ENCODE measurements at regions of chr11 and their contacts with region 1.

Region 1: GRCh38 chr11:64204464-64204989 is 2.0 kb upstream of the FERMT3 start:
- DNase-seq: peak in 3 of 4 donors; percentile 89 to 90 (median 89)
- ATAC-seq: peak; percentile 76
- H3K4me3 ChIP-seq: no peak overlapping the region
- H3K27ac ChIP-seq: peak overlapping the region; percentile 81 to 94
- H3K4me1 ChIP-seq: peaks cover 2 to 52% of the 10 kb centered on the region in 2 donors
- H3K27me3 ChIP-seq: no peaks in the 10 kb centered on the region
- CTCF ChIP-seq: peak; percentile 54 to 63

Region 2: GRCh38 chr11:64048042-64048854 is 156.3 kb before region 1 on chr11:
- intact Hi-C with region 1: no loop called
- DNase-seq: no peak
- ATAC-seq: no peak
- H3K4me3 ChIP-seq: no peak overlapping the region
- H3K27ac ChIP-seq: no peak overlapping the region
- H3K4me1 ChIP-seq: peaks cover 0 to 3% of the 10 kb centered on the region in 2 donors
- H3K27me3 ChIP-seq: no peaks in the 10 kb centered on the region
- CTCF ChIP-seq: no peak

Region 3: DNA sequence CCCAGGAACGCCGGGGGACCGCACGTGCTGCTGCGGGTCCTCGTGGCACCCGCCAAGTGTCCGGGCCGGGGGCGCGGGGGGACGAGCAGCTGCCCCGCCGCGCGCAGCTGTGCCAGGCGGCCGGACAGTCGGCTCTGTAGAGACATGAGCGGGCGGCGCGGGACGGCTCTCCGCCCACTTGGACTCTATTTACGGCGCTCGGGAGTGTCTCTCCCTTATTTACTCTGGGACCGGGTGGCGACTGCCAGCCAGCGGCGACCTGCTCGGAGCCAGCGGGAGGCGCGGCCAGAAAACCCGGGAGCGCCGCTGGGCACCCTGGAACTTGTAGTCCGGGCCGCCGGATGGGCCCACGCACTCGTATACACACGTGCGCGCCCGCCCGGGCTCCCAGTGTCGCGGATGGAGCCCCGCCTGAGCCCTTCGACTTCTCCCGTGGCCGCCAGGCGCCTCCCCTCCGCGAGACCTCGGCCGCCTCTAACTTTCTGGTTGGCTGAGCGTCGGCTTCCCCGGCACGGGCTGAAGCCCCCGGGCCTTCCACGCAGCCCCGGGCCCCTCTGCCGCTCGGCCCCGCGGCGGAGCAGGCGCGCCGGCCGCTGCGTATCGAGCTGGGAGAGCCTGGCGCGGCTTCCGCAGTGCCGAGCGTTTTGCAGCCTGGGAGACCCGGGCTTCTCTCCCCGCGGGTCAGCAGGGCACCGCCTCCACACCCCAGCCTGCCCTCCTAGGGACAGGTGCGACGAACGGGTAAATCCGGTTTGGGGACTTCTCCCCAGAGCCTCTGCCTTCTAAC is 38.5 kb before region 1 on chr11 and contains the start of gene MACROD1:
- intact Hi-C with region 1: no loop called
- DNase-seq: peak; percentile 57 to 94 (median 88)
- ATAC-seq: peak; percentile 94
- H3K4me3 ChIP-seq: peak within 1 kb of the TSS; percentile 74 to 81
- H3K27ac ChIP-seq: peak within 1 kb of the TSS; percentile 68 to 86
- H3K4me1 ChIP-seq: peaks cover 9 to 29% of the 10 kb centered on the region in 2 donors
- H3K27me3 ChIP-seq: peaks cover 0 to 18% of the 10 kb centered on the region in 2 donors
- CTCF ChIP-seq: no peak
- polyA plus RNA-seq, gene MACROD1: 18.5 to 25.1 (median 22.0) TPM

Region 4: DNA sequence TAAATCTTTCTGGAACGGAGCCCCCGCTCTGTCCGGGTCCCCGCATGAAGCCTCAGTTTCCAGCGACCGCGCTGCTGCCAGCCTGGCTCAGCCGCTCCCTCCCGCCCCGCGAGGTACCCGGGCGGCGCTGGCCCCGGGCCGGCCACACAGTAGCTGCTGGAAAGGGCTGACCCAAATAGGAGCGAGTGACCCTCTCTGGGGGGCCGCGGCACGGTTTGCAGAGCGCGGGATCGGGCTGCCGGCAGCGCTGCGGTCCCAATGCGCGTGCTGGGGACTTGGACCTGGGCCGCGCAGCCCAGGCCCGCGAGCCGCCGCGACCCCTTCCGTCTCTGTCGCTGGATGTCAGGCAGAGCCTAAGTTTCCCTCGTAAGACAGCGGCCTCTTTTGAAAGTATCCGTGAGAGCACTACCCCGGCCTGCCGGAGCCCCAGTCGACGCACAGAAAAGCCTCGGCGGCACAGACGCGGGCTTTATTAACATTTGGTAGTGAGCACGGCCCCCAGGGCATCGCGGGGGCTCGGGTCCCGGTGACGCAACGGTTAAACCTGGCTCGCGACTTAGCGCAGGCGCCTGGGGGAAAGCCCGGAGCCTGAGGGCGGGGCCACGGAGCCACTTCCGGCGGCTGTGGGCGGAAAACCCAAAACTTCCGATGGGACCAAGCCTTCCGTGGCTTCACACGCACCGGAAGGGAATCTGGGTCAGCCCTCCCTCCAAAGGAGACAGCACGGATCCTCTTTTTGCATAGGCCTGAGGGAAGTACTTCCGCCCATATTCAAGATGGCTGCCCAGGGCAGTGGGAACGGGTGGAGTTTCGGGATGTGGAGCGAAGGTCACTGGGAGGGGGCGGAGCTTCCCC is 65.1 kb after region 1 on chr11:
- intact Hi-C with region 1: no loop called
- DNase-seq: peak; percentile 98 to 100 (median 98)
- ATAC-seq: peak; percentile 84
- H3K4me3 ChIP-seq: peak overlapping the region; percentile 71 to 81
- H3K27ac ChIP-seq: peak overlapping the region; percentile 97 to 100
- H3K4me1 ChIP-seq: peaks cover 13 to 44% of the 10 kb centered on the region in 2 donors
- H3K27me3 ChIP-seq: no peaks in the 10 kb centered on the region
- CTCF ChIP-seq: no peak

Region 5: DNA sequence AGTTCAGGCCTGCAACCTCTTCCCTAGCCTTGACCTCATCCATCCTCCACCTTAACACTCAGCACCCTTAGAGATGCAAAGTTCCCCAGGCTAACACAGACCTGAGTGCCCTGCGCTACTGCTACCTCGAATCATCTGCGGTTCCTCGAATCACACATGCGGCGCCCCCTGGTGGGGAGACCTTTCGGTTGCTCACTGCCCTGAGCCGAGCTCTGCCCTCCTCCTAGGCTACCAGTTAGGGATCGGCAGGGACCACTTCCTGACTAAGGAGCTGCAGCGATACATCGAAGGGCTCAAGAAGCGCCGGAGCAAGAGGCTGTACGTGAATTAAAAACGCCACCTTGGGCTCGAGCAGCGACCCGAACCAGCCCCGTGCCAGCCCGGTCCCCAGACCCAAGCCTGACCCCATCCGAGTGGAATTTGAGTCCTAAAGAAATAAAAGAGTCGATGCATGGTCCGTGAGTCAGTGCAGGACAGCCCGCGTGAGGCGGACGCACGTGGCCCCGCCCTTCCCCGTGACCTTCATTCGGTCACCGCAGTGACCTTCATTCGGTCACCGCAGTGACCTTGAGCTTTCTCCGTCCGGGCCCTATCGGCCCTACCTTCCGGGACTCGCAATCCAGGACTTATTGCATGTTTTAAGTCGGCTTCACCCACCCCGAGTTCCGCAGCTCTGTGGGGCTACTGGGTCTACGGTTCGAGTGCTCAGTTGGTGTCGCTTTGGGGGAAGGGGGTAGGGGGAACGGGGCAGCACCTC is 100.0 kb after region 1 on chr11:
- intact Hi-C with region 1: loop called in 1 of 2 experiments (anchors 5 kb)
- DNase-seq: peak; percentile 77 to 97 (median 91)
- ATAC-seq: peak; percentile 58
- H3K4me3 ChIP-seq: peak overlapping the region; percentile 29 to 85
- H3K27ac ChIP-seq: peak overlapping the region; percentile 94 to 95
- H3K4me1 ChIP-seq: peaks cover 24 to 47% of the 10 kb centered on the region in 2 donors
- H3K27me3 ChIP-seq: peaks cover 8 to 15% of the 10 kb centered on the region in 2 donors
- CTCF ChIP-seq: peak; percentile 85 to 93